Endothelial cell of umbilical vein (primary cell): ENCODE measurements at regions of chr2 and their contacts with region 1.

Region 1: GRCh38 chr2:70871398-70872211 is 36.0 kb upstream of the CD207 start:
- DNase-seq: peak; percentile 77
- H3K4me3 ChIP-seq: no peak overlapping the region
- H3K27ac ChIP-seq: no peak overlapping the region
- H3K4me1 ChIP-seq: peaks cover 2% of the 10 kb centered on the region
- H3K27me3 ChIP-seq: peaks cover 15 to 27% of the 10 kb centered on the region in 2 experiments
- CTCF ChIP-seq: peak; percentile 95
- POLR2A ChIP-seq: no peak

Region 2: DNA sequence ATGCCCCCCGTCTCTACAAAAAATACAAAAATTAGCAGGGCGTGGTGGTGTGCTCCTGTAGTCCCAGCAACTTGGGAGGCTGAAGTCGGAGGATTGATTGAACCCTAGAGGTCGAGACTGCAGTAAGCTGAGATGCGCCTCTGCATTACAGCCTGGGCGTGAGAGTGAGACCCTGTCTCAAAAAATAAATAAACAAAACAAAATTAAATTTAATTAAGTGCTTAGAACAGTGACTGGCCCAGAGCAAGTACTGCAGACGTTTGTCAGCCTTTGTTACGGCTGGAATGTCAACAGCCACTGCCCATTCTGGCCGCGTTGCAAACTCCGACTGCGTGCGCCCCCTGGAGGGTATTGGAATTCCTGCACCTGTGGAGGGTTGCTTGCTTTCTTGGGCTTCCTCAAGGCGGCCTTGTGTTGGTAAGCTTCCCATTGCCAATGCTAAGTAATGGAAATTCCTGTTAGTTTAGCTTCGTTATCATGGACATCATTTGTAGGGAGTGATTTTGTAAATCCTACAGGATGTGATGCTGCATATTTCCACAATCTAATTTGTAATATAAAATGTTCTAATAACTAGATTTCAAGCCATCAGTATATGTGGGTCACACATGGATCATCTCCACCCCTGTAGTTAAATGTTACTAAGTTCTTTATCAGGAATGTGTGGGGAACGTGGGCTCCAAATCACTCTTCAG is 48.2 kb after region 1 on chr2:
- CTCF ChIA-PET with region 1: interaction called, 71 read pairs
- POLR2A ChIA-PET with region 1: no interaction called
- dilution Hi-C with region 1: no loop called
- intact Hi-C with region 1: loop called (anchors 1 kb)
- DNase-seq: peak; percentile 88
- H3K4me3 ChIP-seq: no peak overlapping the region
- H3K27ac ChIP-seq: no peak overlapping the region
- H3K4me1 ChIP-seq: peaks cover 16% of the 10 kb centered on the region
- H3K27me3 ChIP-seq: peaks cover 8 to 10% of the 10 kb centered on the region in 2 experiments
- CTCF ChIP-seq: peak; percentile 93 to 96
- POLR2A ChIP-seq: no peak

Region 3: DNA sequence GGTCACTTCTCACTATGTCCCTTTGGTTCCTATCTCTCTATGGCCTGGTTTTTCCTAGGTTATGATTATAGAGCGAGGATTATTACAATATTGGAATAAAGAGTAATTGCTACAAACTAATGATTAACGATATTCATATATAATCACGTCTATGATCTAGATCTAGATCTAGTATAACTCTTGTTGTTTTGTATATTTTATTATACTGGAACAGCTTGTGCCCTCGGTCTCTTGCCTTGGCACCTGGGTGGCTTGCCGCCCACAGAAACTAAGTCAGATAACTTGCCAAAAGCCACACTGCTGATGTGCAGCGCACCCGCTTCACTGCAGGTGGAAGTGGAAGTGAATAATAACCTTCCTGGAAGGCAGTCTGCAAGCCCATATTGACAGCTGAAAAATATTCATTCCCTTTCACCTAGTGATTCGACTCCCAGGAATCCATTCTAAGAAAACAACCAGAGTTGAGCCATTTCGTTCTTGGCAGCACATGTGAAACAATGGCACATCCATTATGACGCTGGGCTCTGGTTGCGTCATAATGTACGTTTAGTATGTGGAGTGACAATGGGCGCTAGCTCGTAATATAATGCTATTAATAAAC is 106.1 kb after region 1 on chr2:
- CTCF ChIA-PET with region 1: interaction called, 3 read pairs
- POLR2A ChIA-PET with region 1: no interaction called
- dilution Hi-C with region 1: no loop called
- intact Hi-C with region 1: loop called (anchors 1 kb)
- DNase-seq: peak; percentile 35
- H3K4me3 ChIP-seq: peak overlapping the region in 1 of 3 experiments; percentile 56
- H3K27ac ChIP-seq: peak overlapping the region; percentile 85
- H3K4me1 ChIP-seq: peaks cover 13% of the 10 kb centered on the region
- H3K27me3 ChIP-seq: peaks cover 5 to 6% of the 10 kb centered on the region in 2 experiments
- CTCF ChIP-seq: no peak
- POLR2A ChIP-seq: no peak

Region 4: DNA sequence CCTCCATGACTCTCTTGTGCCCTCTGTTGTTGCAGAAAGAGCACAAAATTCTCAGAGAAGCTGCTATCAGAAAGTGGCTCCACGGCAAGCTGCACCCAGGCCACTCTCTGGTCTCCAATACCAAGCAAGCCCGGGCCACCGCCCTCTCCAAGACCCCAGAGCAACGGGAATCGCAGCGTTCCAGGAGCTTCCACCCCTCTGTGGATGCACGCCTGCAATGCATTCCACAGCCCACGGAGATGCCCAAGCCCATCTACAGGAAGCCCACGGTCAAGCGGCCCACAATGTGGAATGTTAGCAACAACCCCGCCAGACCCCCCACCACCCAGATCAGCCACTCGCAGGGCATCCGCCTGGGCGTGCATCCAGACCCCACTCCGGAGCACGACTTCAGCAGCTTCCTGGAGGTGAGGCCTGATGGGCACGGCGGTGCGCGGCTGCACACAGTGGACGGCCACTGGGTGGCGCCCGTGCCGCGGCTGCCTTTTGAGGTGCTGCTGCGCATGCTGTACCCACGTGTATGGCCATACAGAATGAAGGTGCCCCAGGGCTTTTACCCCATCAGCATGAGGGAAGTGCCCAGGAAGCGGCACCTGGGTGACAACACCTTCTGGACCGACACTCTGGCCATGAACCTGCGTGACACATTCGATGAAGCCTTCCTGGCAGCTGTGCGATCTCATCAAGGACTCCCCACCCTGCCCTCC is 113.1 kb after region 1 on chr2:
- CTCF ChIA-PET with region 1: interaction called, 10 read pairs
- POLR2A ChIA-PET with region 1: no interaction called
- dilution Hi-C with region 1: no loop called
- intact Hi-C with region 1: no loop called
- DNase-seq: peak; percentile 58
- H3K4me3 ChIP-seq: no peak overlapping the region
- H3K27ac ChIP-seq: no peak overlapping the region
- H3K4me1 ChIP-seq: no peaks in the 10 kb centered on the region
- H3K27me3 ChIP-seq: no peaks in the 10 kb centered on the region
- CTCF ChIP-seq: peak; percentile 94 to 96
- POLR2A ChIP-seq: no peak